PC-9 (cell line): ENCODE measurements at regions of chr3 and their contacts with region 1.

Region 1: DNA sequence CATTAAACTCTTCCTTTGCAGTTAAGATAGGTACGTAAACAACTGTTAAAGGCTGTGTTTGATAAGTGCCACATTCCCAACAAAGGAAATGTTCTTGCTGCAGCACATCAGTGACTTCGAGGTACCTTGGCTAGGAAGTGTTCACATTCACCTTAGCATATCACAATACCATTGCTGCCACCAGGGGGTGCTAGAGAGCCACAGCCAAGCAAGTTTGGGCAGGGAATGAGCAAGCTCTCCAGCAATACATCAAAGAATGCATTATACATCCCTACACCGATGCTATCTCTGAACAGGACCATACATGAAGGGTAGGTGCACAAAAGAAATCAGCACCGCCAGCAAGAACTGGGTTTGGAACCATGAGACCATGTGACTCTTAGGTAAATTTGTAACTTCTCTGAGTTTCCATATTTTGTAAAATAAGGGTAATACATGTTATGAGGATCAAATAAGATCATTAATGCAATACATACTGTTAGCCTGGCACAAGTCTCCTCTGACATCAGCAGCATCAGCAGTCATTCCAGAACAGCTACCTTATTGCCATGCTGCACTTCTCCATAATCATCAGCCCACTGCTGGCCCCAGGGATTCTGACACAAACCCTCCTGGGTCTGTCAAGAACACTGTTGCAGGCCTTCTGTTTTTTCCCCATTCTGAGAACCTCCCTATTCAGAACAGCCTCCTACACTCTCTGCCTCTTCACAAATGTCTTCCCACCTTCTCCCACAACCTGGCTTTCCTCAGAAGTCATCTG is 37.6 kb downstream of the RYK start:
- DNase-seq: peak; percentile 71 to 90
- H3K4me3 ChIP-seq: no peak overlapping the region
- H3K27ac ChIP-seq: no peak overlapping the region
- H3K4me1 ChIP-seq: no peaks in the 10 kb centered on the region
- H3K27me3 ChIP-seq: no peaks in the 10 kb centered on the region
- CTCF ChIP-seq: peak; percentile 95

Region 2: GRCh38 chr3:133821767-133822638 is 391.1 kb before region 1 on chr3:
- CTCF ChIA-PET with region 1: no interaction called
- POLR2A ChIA-PET with region 1: no interaction called
- intact Hi-C with region 1: loop called (anchors 2 kb)
- DNase-seq: no peak
- H3K4me3 ChIP-seq: no peak overlapping the region
- H3K27ac ChIP-seq: no peak overlapping the region
- H3K4me1 ChIP-seq: no peaks in the 10 kb centered on the region
- H3K27me3 ChIP-seq: no peaks in the 10 kb centered on the region
- CTCF ChIP-seq: no peak

Region 3: DNA sequence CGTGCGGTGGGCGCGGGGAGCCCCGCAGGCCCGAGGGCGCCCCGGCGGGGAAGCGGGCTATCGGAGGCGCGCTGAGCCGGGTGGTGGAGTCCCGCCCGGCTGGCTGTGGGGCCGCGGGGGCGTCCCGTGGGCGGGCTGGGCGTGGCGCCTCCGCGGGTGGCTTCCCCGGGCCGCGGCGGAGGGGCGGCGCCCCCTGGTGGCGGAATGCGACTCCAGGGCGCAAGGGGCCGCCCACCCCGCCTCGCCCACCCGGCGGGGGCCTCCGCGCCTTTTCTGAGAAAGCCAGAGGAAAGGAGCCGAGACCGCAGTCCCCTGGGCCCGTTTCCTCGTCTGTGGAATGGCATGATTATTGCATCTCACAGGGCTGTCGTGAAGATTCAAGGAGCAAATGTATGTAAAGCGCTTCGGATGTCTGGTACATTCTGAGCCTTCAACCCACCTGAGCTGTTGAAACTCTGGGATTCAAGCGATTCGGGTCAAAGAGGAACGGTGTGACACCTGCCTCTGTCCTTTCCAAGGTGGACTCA is 285.5 kb before region 1 on chr3:
- CTCF ChIA-PET with region 1: interaction called, 3 read pairs
- POLR2A ChIA-PET with region 1: no interaction called
- intact Hi-C with region 1: loop called (anchors 1 kb)
- DNase-seq: no peak
- H3K4me3 ChIP-seq: no peak overlapping the region
- H3K27ac ChIP-seq: no peak overlapping the region
- H3K4me1 ChIP-seq: no peaks in the 10 kb centered on the region
- H3K27me3 ChIP-seq: 0 out of 2 replicates have a peak, but pooled peaks cover 5% of the 10 kb centered on the region
- CTCF ChIP-seq: no peak

Region 4: DNA sequence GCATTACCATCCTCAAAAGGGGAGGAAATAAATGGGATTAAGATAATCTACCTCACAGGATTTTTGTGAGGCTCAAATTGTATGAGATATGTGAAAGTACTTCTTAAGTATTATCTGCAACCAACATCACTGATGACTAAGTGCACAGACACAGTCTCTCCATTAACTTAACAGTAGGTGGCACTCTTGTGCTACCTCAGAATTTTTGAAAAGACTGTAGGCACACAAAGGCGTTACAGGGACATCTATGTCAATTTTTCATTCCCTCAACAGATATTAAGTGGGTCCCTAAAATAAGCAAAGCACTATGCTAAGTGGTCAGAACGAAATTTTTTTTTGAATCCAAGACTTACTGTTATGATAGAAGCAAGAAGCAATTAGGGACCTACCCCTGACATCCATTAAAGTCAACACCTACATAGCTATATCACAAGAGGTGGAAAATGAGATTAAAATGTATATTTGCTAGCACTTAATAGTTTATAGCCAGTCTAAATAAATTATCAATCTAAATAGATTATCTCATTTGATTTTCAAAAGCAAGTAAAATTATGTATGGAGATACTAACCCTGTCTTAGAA is 15.3 kb before region 1 on chr3:
- CTCF ChIA-PET with region 1: interaction called, 7 read pairs
- POLR2A ChIA-PET with region 1: interaction called, 4 read pairs
- intact Hi-C with region 1: loop called (anchors 2 kb)
- DNase-seq: peak; percentile 18 to 51
- H3K4me3 ChIP-seq: no peak overlapping the region
- H3K27ac ChIP-seq: no peak overlapping the region
- H3K4me1 ChIP-seq: peaks cover 22% of the 10 kb centered on the region
- H3K27me3 ChIP-seq: no peaks in the 10 kb centered on the region
- CTCF ChIP-seq: peak; percentile 81

Region 5: GRCh38 chr3:134250717-134251220 is 37.7 kb after region 1 on chr3 and contains the start of gene RYK:
- CTCF ChIA-PET with region 1: interaction called, 3 read pairs
- POLR2A ChIA-PET with region 1: interaction called, 4 read pairs
- intact Hi-C with region 1: loop called (anchors 2 kb)
- DNase-seq: peak; percentile 67 to 92
- H3K4me3 ChIP-seq: peak within 1 kb of the TSS; percentile 91
- H3K27ac ChIP-seq: peak within 1 kb of the TSS; percentile 62
- H3K4me1 ChIP-seq: peaks cover 39% of the 10 kb centered on the region
- H3K27me3 ChIP-seq: no peaks in the 10 kb centered on the region
- CTCF ChIP-seq: no peak
- total RNA-seq, gene RYK: 74.6 and 93.7 TPM in 2 replicates

Region 6: GRCh38 chr3:134392336-134392983 is 179.4 kb after region 1 on chr3:
- CTCF ChIA-PET with region 1: no interaction called
- POLR2A ChIA-PET with region 1: no interaction called
- intact Hi-C with region 1: no loop called
- DNase-seq: no peak
- H3K4me3 ChIP-seq: no peak overlapping the region
- H3K27ac ChIP-seq: no peak overlapping the region
- H3K4me1 ChIP-seq: no peaks in the 10 kb centered on the region
- H3K27me3 ChIP-seq: no peaks in the 10 kb centered on the region
- CTCF ChIP-seq: no peak